ENCODE measurements at regions of chr5 and their contacts with region 1.

Region 1: DNA sequence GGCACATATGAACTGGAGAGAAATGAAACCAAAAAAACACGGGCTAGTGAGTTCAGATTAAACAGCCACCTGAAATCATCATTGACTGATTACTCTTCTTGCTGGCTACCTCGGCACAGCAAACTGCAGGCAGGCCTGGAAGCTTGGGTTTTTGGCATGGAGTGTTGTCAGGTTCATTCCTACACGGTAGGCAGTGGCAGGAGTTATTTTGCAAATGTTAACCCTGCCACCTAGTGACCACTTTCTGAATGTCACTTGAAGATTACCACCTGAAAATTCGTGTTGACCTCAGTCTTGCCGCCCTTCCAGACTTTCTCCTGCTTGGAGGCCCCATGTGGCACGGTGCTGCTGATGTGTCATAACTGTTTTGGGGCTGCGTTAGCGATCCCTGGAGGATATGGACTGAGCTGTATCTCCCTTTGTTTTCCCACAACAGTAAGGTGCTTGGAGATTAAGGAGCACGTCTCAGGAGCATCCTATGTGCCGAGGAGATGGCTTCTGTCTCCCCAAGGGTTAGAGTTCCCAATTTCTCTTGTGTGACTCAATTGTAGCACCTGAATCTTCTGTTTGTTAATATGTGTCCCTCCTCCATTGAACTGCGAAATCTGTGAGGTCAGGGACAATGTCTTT is 12.7 kb upstream of the CD180 start:
- DNase-seq: peak; percentile 73
- CTCF ChIP-seq: peak; percentile 67

Region 2: GRCh38 chr5:66492076-66492475 is 717.2 kb before region 1 on chr5:
- in situ Hi-C with region 1: no loop called
- DNase-seq: no peak
- CTCF ChIP-seq: no peak

Region 3: DNA sequence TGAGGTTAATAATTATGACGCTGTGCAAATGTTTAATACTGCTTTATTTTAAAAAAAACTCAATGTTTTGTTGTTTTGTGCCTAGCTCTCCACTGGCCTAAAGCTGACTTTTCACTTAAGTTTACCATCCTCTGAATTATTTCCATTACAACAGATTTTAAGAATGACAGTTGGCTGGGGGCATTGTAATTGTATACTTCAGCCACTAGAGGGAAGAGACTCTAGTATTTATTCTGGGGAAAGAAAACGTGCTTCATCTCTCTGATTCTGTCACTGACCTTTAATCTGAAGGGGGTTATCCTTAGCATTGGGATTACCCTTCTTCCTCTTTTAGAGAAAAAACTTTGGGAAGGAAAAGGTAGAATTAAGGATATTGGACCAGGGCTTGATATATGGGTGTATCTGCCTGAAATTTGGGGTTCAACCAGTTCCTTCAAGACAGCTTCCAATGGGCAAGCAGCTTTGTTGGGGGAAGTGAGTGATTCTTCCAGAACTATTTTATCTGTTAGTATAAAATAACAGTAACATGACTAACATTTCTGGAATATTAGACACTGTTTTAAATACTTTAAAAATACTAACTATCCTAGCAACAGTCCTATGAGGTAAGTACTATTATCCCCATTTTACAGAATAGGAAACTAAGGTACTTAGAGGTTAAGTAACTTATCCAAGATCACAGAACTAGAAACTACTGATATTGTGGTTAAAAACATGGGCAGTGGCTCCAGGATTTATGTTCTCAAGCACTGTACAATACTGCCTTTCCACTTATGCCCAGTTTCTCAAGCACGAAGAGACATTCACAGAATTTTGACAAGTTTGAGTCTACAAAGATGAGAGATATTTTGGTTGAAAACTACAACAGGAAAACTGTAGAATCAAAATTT is 221.1 kb before region 1 on chr5:
- in situ Hi-C with region 1: loop called (anchors 25 kb)
- DNase-seq: peak; percentile 26
- CTCF ChIP-seq: peak; percentile 23

Region 4: GRCh38 chr5:67156976-67157583 is 52.2 kb before region 1 on chr5:
- in situ Hi-C with region 1: loop called (anchors 5 kb)
- DNase-seq: peak; percentile 57
- CTCF ChIP-seq: peak; percentile 76

Region 5: GRCh38 chr5:67350618-67351201 is 141.5 kb after region 1 on chr5:
- in situ Hi-C with region 1: no loop called
- DNase-seq: no peak
- CTCF ChIP-seq: no peak

Region 6: GRCh38 chr5:67773411-67774266 is 564.4 kb after region 1 on chr5:
- in situ Hi-C with region 1: no loop called
- DNase-seq: no peak
- CTCF ChIP-seq: no peak